PC-3 (cell line): ENCODE measurements at regions of chr5 and their contacts with region 1.

Region 1: DNA sequence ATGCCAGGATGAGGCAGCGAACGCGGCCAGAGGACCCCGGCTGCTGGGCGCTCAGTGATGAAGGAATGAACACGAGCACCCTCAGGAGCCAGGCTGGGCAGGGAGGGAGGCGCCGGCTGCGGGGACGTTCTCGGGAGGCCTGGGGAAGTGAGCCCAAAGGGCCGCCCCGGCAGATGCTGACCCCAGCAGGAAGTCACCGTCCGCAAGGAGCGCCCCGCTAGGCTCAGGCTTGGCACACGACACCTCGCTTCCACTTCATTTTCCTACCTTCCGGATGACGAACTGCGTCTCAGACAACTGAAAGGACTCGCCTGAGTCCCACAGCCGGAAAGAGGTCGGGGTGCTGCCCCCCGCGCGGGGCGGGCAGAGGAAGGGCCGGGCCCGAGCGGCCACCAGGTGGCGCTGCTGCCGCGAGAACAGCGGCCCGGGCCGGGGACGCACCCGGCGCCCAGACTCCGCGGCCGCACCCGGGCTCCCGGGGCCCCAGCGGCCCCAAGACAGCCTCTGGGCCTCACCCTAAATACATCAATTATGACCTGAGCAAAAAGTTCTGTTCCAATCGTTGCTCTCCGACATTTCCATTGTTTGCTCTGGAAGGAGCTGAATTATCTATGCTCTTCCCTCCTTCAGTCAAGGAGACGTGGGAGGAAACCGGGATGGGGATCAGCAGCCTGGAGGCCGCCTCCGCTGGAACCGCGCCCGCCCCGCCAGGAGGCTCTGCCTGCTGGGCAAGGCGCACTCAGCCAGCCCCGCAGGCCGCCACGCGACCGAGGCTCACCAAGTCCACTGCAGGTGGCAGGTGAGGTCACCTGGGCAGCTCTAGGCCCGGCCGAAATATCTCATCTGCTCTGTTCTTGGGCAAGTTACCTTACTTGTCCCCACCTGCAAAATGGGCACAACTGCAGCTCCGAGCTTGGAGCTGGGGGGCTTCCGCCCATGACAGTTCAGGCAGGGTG is 107.0 kb downstream of the ZNF354C start:
- DNase-seq: peak; percentile 38
- ATAC-seq: peak; percentile 72
- H3K4me3 ChIP-seq: no peak overlapping the region; the same call in 1 of the 2 replicates
- H3K27ac ChIP-seq: no peak overlapping the region
- H3K4me1 ChIP-seq: no peaks in the 10 kb centered on the region
- H3K27me3 ChIP-seq: no peaks in the 10 kb centered on the region
- CTCF ChIP-seq: peak; percentile 84

Region 2: DNA sequence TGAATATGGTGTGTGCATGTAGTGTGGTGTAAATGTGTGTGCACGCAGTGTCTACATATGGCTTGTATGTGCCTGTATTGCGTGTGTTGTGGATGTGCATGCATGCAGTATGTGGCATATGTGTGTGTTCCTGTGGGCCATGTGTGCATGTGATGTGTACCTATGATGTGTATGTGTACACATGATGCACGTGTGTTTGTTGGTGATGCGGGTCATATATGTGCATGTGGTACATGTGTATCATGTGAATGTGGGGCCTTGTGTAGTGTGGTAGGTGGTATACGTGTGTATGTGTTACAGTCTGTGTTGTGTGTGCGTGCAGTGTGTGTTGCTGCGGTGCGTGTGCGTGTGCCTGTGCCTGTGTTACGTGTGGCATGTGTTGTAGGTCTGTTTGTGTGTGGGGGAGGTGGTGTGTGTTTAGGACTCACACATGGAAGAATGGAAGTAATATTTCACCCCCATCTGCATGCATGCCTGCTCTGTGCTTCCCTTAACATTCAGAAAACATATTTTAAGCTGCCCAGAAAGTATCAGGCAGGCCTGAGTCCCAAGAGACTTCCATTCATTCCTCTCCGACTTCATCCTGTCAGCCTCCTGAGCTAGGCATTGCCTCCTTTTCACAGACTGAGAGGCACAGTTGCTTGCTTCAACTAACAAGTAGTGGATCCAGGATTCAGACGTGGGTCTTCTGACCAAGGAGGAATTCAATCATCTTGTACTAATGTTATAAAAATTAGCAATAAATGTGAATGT is 327.8 kb after region 1 on chr5:
- CTCF ChIA-PET with region 1: no interaction called
- POLR2A ChIA-PET with region 1: no interaction called
- intact Hi-C with region 1: loop called (anchors 5 kb)
- DNase-seq: no peak
- ATAC-seq: no peak
- H3K4me3 ChIP-seq: no peak overlapping the region
- H3K27ac ChIP-seq: no peak overlapping the region
- H3K4me1 ChIP-seq: no peaks in the 10 kb centered on the region
- H3K27me3 ChIP-seq: no peaks in the 10 kb centered on the region
- CTCF ChIP-seq: no peak

Region 3: GRCh38 chr5:179967489-179967888 is 800.3 kb after region 1 on chr5:
- CTCF ChIA-PET with region 1: no interaction called
- POLR2A ChIA-PET with region 1: no interaction called
- intact Hi-C with region 1: no loop called
- DNase-seq: no peak
- ATAC-seq: no peak
- H3K4me3 ChIP-seq: no peak overlapping the region
- H3K27ac ChIP-seq: no peak overlapping the region
- H3K4me1 ChIP-seq: no peaks in the 10 kb centered on the region
- H3K27me3 ChIP-seq: no peaks in the 10 kb centered on the region
- CTCF ChIP-seq: no peak